CD4-positive, alpha-beta T cell (primary cell): ENCODE measurements at regions of chr6 and their contacts with region 1.

Region 1: DNA sequence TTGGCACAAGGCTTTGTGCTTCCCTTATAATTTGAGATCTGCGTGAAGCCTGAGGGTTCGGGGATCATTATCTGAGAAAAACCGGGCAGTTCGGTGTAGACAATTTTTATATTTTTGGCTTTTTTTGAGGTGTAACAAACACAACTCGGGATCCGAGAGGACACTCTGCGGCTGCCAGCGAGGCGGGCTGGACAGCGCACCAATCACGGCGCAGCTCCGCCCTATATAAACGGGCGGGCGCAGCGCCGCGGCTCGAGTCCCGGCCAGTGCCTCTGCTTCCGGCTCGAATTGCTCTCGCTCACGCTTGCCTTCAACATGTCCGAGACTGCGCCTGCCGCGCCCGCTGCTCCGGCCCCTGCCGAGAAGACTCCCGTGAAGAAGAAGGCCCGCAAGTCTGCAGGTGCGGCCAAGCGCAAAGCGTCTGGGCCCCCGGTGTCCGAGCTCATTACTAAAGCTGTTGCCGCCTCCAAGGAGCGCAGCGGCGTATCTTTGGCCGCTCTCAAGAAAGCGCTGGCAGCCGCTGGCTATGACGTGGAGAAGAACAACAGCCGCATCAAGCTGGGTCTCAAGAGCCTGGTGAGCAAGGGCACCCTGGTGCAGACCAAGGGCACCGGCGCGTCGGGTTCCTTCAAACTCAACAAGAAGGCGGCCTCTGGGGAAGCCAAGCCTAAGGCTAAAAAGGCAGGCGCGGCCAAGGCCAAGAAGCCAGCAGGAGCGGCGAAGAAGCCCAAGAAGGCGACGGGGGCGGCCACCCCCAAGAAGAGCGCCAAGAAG is 69.0 kb downstream of the HFE start:
- DNase-seq: peak; percentile 76 to 94 (median 88)
- ATAC-seq: peak; percentile 33
- H3K4me3 ChIP-seq: peak overlapping the region; percentile 92
- H3K4me3 Mint-ChIP-seq: peak overlapping the region; percentile 99
- H3K27ac ChIP-seq: peak overlapping the region; percentile 67 to 91
- H3K27ac Mint-ChIP-seq: peak overlapping the region; percentile 97
- H3K4me1 ChIP-seq: peaks cover 37% of the 10 kb centered on the region
- H3K4me1 Mint-ChIP-seq: peaks cover 40% of the 10 kb centered on the region
- H3K27me3 ChIP-seq: no peaks in the 10 kb centered on the region
- H3K27me3 Mint-ChIP-seq: peaks cover 12% of the 10 kb centered on the region
- CTCF ChIP-seq: no peak

Region 2: GRCh38 chr6:26006086-26006939 is 149.9 kb before region 1 on chr6:
- CTCF ChIA-PET with region 1: no interaction called
- POLR2A ChIA-PET with region 1: no interaction called
- intact Hi-C with region 1: no loop called
- DNase-seq: no peak
- ATAC-seq: no peak
- H3K4me3 ChIP-seq: no peak overlapping the region
- H3K4me3 Mint-ChIP-seq: no peak overlapping the region
- H3K27ac ChIP-seq: no peak overlapping the region
- H3K27ac Mint-ChIP-seq: no peak overlapping the region
- H3K4me1 ChIP-seq: no peaks in the 10 kb centered on the region
- H3K4me1 Mint-ChIP-seq: peaks cover 10% of the 10 kb centered on the region
- H3K27me3 ChIP-seq: no peaks in the 10 kb centered on the region
- H3K27me3 Mint-ChIP-seq: no peaks in the 10 kb centered on the region
- CTCF ChIP-seq: no peak

Region 3: DNA sequence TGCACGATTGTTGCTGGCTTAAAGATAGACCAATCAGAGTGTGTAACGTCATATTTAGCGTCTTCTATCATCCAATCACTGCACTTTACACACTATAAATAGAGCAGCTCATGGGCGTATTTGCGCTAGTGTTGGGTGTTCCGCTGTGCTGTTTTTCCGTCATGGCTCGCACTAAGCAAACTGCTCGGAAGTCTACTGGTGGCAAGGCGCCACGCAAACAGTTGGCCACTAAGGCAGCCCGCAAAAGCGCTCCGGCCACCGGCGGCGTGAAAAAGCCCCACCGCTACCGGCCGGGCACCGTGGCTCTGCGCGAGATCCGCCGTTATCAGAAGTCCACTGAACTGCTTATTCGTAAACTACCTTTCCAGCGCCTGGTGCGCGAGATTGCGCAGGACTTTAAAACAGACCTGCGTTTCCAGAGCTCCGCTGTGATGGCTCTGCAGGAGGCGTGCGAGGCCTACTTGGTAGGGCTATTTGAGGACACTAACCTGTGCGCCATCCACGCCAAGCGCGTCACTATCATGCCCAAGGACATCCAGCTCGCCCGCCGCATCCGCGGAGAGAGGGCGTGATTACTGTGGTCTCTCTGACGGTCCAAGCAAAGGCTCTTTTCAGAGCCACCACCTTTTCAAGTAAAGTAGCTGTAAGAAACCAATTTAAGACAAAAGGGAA is 135.8 kb before region 1 on chr6:
- CTCF ChIA-PET with region 1: no interaction called
- POLR2A ChIA-PET with region 1: interaction called, 164 read pairs
- intact Hi-C with region 1: loop called in 1 of 2 experiments (anchors 2 kb)
- DNase-seq: peak; percentile 63 to 96 (median 78)
- ATAC-seq: peak; percentile 50
- H3K4me3 ChIP-seq: peak overlapping the region; percentile 73
- H3K4me3 Mint-ChIP-seq: peak overlapping the region; percentile 95
- H3K27ac ChIP-seq: peak overlapping the region; percentile 95 to 96
- H3K27ac Mint-ChIP-seq: peak overlapping the region; percentile 97
- H3K4me1 ChIP-seq: peaks cover 38% of the 10 kb centered on the region
- H3K4me1 Mint-ChIP-seq: peaks cover 41% of the 10 kb centered on the region
- H3K27me3 ChIP-seq: no peaks in the 10 kb centered on the region
- H3K27me3 Mint-ChIP-seq: no peaks in the 10 kb centered on the region
- CTCF ChIP-seq: no peak

Region 4: DNA sequence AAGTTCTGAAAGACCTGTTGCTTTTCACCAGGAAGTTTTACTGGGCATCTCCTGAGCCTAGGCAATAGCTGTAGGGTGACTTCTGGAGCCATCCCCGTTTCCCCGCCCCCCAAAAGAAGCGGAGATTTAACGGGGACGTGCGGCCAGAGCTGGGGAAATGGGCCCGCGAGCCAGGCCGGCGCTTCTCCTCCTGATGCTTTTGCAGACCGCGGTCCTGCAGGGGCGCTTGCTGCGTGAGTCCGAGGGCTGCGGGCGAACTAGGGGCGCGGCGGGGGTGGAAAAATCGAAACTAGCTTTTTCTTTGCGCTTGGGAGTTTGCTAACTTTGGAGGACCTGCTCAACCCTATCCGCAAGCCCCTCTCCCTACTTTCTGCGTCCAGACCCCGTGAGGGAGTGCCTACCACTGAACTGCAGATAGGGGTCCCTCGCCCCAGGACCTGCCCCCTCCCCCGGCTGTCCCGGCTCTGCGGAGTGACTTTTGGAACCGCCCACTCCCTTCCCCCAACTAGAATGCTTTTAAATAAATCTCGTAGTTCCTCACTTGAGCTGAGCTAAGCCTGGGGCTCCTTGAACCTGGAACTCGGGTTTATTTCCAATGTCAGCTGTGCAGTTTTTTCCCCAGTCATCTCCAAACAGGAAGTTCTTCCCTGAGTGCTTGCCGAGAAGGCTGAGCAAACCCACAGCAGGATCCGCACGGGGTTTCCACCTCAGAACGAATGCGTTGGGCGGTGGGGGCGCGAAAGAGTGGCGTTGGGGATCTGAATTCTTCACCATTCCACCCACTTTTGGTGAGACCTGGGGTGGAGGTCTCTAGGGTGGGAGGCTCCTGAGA is 68.8 kb before region 1 on chr6 and contains the start of gene HFE:
- CTCF ChIA-PET with region 1: no interaction called
- POLR2A ChIA-PET with region 1: interaction called, 71 read pairs
- intact Hi-C with region 1: no loop called
- DNase-seq: peak in 11 of 14 experiments; percentile 3 to 57 (median 21)
- ATAC-seq: peak; percentile 25
- H3K4me3 ChIP-seq: peak within 1 kb of the TSS; percentile 86
- H3K4me3 Mint-ChIP-seq: peak within 1 kb of the TSS; percentile 87
- H3K27ac ChIP-seq: peak within 1 kb of the TSS; percentile 23 to 61
- H3K27ac Mint-ChIP-seq: peak within 1 kb of the TSS; percentile 71
- H3K4me1 ChIP-seq: peaks cover 33% of the 10 kb centered on the region
- H3K4me1 Mint-ChIP-seq: peaks cover 34% of the 10 kb centered on the region
- H3K27me3 ChIP-seq: no peaks in the 10 kb centered on the region
- H3K27me3 Mint-ChIP-seq: no peaks in the 10 kb centered on the region
- CTCF ChIP-seq: no peak
- total RNA-seq, gene HFE: 0.08 to 0.28 TPM

Region 5: GRCh38 chr6:26183581-26184366 is 27.5 kb after region 1 on chr6:
- CTCF ChIA-PET with region 1: interaction called, 6 read pairs
- POLR2A ChIA-PET with region 1: interaction called, 594 read pairs
- intact Hi-C with region 1: loop called in 1 of 2 experiments (anchors 2 kb)
- DNase-seq: peak in 13 of 14 experiments; percentile 20 to 94 (median 48)
- ATAC-seq: peak; percentile 89
- H3K4me3 ChIP-seq: peak overlapping the region; percentile 62
- H3K4me3 Mint-ChIP-seq: peak overlapping the region; percentile 99
- H3K27ac ChIP-seq: peak overlapping the region; percentile 43 to 72
- H3K27ac Mint-ChIP-seq: peak overlapping the region; percentile 86
- H3K4me1 ChIP-seq: peaks cover 34% of the 10 kb centered on the region
- H3K4me1 Mint-ChIP-seq: peaks cover 42% of the 10 kb centered on the region
- H3K27me3 ChIP-seq: no peaks in the 10 kb centered on the region
- H3K27me3 Mint-ChIP-seq: no peaks in the 10 kb centered on the region
- CTCF ChIP-seq: no peak

Region 6: DNA sequence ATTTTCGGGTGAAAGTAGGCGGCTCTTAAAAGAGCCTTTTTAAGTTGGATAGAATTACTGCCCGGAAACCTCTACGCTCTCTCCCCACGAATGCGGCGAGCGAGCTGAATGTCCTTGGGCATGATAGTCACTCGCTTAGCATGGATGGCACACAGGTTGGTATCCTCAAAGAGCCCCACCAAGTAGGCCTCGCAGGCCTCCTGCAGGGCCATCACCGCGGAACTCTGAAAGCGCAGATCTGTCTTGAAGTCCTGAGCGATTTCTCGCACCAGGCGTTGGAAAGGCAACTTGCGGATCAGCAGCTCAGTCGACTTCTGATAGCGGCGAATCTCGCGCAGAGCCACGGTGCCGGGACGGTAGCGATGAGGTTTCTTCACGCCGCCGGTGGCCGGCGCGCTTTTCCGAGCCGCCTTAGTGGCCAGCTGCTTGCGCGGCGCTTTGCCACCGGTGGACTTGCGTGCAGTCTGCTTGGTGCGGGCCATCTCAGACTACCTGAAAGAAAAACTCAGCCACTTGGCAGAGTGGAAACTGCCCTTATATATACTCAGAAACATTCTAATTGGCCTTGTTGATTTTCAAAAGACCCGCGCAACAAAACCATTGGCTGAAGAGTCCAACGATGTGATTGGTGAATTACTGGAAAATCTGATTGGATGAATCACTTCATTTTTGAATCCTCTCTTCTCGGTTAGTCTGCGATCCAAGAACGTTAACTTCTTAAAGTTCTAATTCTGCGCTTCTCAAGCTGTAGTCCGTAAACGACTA is 114.8 kb after region 1 on chr6:
- CTCF ChIA-PET with region 1: interaction called, 5 read pairs
- POLR2A ChIA-PET with region 1: interaction called, 248 read pairs
- intact Hi-C with region 1: no loop called
- DNase-seq: peak; percentile 60 to 92 (median 75)
- ATAC-seq: peak; percentile 25
- H3K4me3 ChIP-seq: peak overlapping the region; percentile 59
- H3K4me3 Mint-ChIP-seq: no peak overlapping the region
- H3K27ac ChIP-seq: peak overlapping the region; percentile 82 to 84
- H3K27ac Mint-ChIP-seq: no peak overlapping the region
- H3K4me1 ChIP-seq: peaks cover 28% of the 10 kb centered on the region
- H3K4me1 Mint-ChIP-seq: peaks cover 7% of the 10 kb centered on the region
- H3K27me3 ChIP-seq: no peaks in the 10 kb centered on the region
- H3K27me3 Mint-ChIP-seq: no peaks in the 10 kb centered on the region
- CTCF ChIP-seq: no peak

Region 7: GRCh38 chr6:27132532-27133280 is 976.4 kb after region 1 on chr6:
- CTCF ChIA-PET with region 1: no interaction called
- POLR2A ChIA-PET with region 1: interaction called, 96 read pairs
- intact Hi-C with region 1: loop called (anchors 1 to 2 kb)
- DNase-seq: peak; percentile 80 to 99 (median 88)
- ATAC-seq: peak; percentile 79
- H3K4me3 ChIP-seq: peak overlapping the region; percentile 75
- H3K4me3 Mint-ChIP-seq: no peak overlapping the region
- H3K27ac ChIP-seq: peak overlapping the region; percentile 79 to 81
- H3K27ac Mint-ChIP-seq: no peak overlapping the region
- H3K4me1 ChIP-seq: peaks cover 31% of the 10 kb centered on the region
- H3K4me1 Mint-ChIP-seq: peaks cover 12% of the 10 kb centered on the region
- H3K27me3 ChIP-seq: no peaks in the 10 kb centered on the region
- H3K27me3 Mint-ChIP-seq: no peaks in the 10 kb centered on the region
- CTCF ChIP-seq: no peak

Region 8: DNA sequence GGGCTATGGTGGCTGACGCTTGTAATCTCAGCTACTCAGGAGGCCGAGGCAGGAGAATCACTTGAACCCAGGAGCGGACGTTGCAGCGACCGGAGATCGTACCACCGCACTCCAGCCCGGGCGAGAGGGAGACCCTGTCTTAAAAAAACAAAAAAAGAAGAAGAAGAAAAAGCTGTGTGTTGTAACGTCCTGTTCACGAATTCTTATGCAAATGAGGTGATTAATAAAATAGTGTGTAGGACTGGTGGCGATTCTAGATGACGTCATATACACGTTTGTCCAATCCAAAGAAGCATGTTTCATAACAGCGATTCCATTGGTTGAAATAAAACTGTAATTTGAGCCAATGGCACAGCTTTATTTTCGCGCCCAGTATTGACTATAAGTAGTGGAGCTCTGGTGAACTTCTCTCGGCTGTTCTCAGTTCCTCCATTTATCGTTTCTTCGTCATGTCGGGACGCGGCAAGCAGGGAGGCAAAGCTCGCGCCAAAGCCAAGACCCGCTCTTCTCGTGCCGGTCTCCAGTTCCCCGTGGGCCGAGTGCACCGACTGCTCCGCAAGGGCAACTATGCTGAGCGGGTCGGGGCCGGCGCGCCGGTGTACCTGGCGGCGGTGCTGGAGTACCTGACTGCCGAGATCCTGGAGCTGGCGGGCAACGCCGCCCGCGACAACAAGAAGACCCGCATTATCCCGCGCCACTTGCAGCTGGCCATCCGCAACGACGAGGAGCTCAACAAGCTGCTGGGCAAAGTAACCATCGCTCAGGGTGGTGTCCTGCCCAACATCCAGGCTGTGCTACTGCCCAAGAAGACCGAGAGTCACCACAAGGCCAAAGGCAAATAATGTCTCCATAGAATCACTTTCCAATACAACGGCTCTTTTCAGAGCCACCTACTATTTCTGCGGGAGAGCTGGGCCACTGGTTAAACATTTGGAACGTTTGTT is 1708.9 kb after region 1 on chr6:
- CTCF ChIA-PET with region 1: no interaction called
- POLR2A ChIA-PET with region 1: interaction called, 110 read pairs
- intact Hi-C with region 1: no loop called
- DNase-seq: peak in 13 of 14 experiments; percentile 35 to 97 (median 61)
- ATAC-seq: peak; percentile 83
- H3K4me3 ChIP-seq: peak overlapping the region; percentile 59
- H3K4me3 Mint-ChIP-seq: peak overlapping the region; percentile 100
- H3K27ac ChIP-seq: peak overlapping the region; percentile 54 to 78
- H3K27ac Mint-ChIP-seq: peak overlapping the region; percentile 93
- H3K4me1 ChIP-seq: peaks cover 38% of the 10 kb centered on the region
- H3K4me1 Mint-ChIP-seq: peaks cover 41% of the 10 kb centered on the region
- H3K27me3 ChIP-seq: no peaks in the 10 kb centered on the region
- H3K27me3 Mint-ChIP-seq: peaks cover 3% of the 10 kb centered on the region
- CTCF ChIP-seq: no peak